ENCODE measurements at regions of chr7 and their contacts with region 1.

Region 1: GRCh38 chr7:148962823-148963582 is 65.3 kb downstream of the PDIA4 start:
- DNase-seq: peak in 1 of 2 experiments; percentile 63
- H3K4me3 ChIP-seq: peak overlapping the region; percentile 67
- H3K4me3 Mint-ChIP-seq: peak overlapping the region; percentile 92
- H3K27ac Mint-ChIP-seq: peak overlapping the region; percentile 70
- H3K4me1 ChIP-seq: peaks cover 10% of the 10 kb centered on the region; the same call in 1 of the 2 replicates
- H3K4me1 Mint-ChIP-seq: peaks cover 18% of the 10 kb centered on the region
- H3K27me3 ChIP-seq: no peaks in the 10 kb centered on the region
- H3K27me3 Mint-ChIP-seq: no peaks in the 10 kb centered on the region
- CTCF ChIP-seq: peak; percentile 64 to 74

Region 2: GRCh38 chr7:148503875-148504487 is 459.0 kb before region 1 on chr7:
- CTCF ChIA-PET with region 1: interaction called, 3 read pairs
- POLR2A ChIA-PET with region 1: no interaction called
- intact Hi-C with region 1: loop called (anchors 1 kb)
- DNase-seq: peak in 1 of 2 experiments; percentile 29
- H3K4me3 ChIP-seq: no peak overlapping the region
- H3K4me3 Mint-ChIP-seq: no peak overlapping the region
- H3K27ac Mint-ChIP-seq: no peak overlapping the region
- H3K4me1 ChIP-seq: no peaks in the 10 kb centered on the region
- H3K4me1 Mint-ChIP-seq: peaks cover 20% of the 10 kb centered on the region
- H3K27me3 ChIP-seq: no peaks in the 10 kb centered on the region
- H3K27me3 Mint-ChIP-seq: no peaks in the 10 kb centered on the region
- CTCF ChIP-seq: peak; percentile 68 to 76

Region 3: GRCh38 chr7:148708026-148708885 is 254.7 kb before region 1 on chr7:
- CTCF ChIA-PET with region 1: no interaction called
- POLR2A ChIA-PET with region 1: no interaction called
- intact Hi-C with region 1: loop called (anchors 5 kb)
- DNase-seq: no peak
- H3K4me3 ChIP-seq: no peak overlapping the region
- H3K4me3 Mint-ChIP-seq: peak overlapping the region; percentile 1
- H3K27ac Mint-ChIP-seq: peak overlapping the region; percentile 17
- H3K4me1 ChIP-seq: peaks cover 40% of the 10 kb centered on the region
- H3K4me1 Mint-ChIP-seq: peaks cover 44% of the 10 kb centered on the region
- H3K27me3 ChIP-seq: no peaks in the 10 kb centered on the region
- H3K27me3 Mint-ChIP-seq: no peaks in the 10 kb centered on the region
- CTCF ChIP-seq: no peak

Region 4: DNA sequence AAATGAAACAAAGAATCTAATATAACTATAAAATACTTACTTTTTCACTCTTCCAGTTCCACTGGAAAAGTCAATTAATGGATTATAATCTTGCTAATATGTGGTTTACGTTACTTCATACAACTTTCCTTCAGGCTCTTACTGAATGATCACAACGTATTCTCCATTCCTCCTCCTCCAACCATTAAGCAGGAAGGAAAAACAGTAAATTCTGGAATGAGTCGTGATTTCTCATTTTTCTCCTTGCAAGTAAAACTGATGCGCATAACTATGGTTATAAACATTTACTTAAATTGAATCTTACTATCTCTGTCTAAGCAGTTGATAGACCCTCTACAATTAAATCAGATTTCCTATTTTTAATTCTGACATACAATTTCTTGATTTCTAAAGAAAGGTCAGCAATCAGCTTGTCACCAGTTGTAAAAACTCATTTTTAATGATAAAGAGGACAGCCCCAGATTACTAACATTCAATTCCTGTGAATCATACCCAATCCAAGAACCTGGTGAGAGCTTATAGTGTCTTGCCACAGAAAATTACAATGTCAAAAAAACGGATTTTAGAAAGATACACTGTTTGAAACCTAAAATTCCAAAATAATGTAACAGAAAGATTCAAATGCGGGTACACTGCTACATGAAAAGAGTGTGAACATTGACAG is 143.2 kb before region 1 on chr7:
- CTCF ChIA-PET with region 1: interaction called, 3 read pairs
- POLR2A ChIA-PET with region 1: no interaction called
- intact Hi-C with region 1: loop called (anchors 2 kb)
- DNase-seq: no peak
- H3K4me3 ChIP-seq: no peak overlapping the region
- H3K4me3 Mint-ChIP-seq: no peak overlapping the region
- H3K27ac Mint-ChIP-seq: no peak overlapping the region
- H3K4me1 ChIP-seq: no peaks in the 10 kb centered on the region; the same call in 1 of the 2 replicates
- H3K4me1 Mint-ChIP-seq: peaks cover 6% of the 10 kb centered on the region
- H3K27me3 ChIP-seq: no peaks in the 10 kb centered on the region
- H3K27me3 Mint-ChIP-seq: no peaks in the 10 kb centered on the region
- CTCF ChIP-seq: no peak

Region 5: DNA sequence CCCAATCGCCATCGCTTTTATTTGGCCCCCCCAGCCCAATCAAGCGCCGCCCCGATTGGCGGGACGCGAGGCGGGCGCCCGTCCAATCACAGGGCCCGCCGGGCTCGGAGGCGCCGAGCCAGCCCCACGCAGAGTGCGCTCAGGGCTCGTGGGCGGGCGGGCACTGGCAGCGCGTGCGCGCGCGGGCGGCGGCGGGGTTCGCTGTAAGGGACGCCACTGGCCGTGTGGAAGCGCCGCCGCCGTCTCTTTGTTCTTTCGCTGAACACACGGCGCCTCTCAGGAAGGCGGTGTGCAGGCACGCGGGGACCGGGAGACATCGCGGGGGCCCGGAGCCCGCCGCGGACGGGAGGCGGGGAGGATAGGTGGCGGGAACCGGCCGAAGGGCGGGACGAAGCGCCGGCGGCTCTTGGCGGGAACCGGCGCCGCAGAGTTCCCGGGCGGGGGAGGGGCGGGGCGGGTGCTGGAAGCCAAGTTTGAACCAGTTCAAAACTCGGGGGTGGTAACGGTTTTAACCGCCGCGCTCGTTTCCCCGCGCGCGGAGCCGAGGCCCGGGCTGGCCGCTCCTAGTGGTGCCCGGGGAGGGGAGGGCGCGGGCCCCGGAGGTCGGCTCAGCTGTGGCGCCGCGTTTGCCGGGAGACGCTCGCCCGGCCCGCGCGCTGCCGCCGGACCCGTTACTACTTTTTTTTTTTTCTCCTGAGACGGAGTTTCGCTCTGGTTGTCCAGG is 78.5 kb before region 1 on chr7:
- CTCF ChIA-PET with region 1: no interaction called
- POLR2A ChIA-PET with region 1: no interaction called
- intact Hi-C with region 1: loop called (anchors 2 kb)
- DNase-seq: peak; percentile 91 to 96
- H3K4me3 ChIP-seq: peak overlapping the region; percentile 98
- H3K4me3 Mint-ChIP-seq: peak overlapping the region; percentile 95
- H3K27ac Mint-ChIP-seq: peak overlapping the region; percentile 93
- H3K4me1 ChIP-seq: peaks cover 6% of the 10 kb centered on the region; the same call in 1 of the 2 replicates
- H3K4me1 Mint-ChIP-seq: no peaks in the 10 kb centered on the region
- H3K27me3 ChIP-seq: no peaks in the 10 kb centered on the region
- H3K27me3 Mint-ChIP-seq: no peaks in the 10 kb centered on the region
- CTCF ChIP-seq: no peak

Region 6: DNA sequence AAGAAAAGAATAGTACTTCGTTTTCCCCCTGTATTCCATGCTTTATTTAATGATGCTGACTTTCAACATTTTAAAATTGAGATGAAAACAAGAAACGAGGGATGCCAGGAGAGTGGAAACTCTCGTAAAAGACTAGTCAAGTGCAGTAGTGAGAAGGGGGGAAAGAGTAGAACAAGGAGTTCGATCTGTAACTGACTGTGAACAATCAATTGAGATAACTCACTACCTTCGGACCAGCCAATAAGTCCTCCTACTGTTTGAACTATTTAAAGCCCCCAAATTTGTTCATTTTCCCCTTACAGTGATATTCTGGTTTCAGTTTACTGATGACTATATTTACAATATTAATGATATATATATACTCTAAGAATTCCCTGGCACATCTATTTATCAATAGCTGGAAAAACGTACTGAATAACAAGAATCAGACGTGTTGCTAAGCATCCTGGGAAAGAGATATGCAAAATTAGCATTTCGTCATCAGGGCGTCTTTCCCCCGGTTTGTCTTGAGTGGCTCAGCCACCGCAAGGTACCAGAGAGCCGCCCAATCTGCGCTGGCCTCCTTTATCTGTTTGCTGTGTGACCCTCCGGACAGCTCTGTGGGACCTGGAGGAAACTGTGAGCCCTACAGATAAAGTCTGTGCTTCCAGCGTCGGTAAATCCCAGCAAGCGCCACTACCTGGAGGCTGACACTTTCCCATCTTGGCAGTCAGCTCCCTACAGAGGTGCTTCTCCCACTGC is 24.2 kb after region 1 on chr7:
- CTCF ChIA-PET with region 1: interaction called, 5 read pairs
- POLR2A ChIA-PET with region 1: interaction called, 3 read pairs
- intact Hi-C with region 1: loop called (anchors 1 kb)
- DNase-seq: peak; percentile 90 to 95
- H3K4me3 ChIP-seq: peak overlapping the region; percentile 50
- H3K4me3 Mint-ChIP-seq: peak overlapping the region; percentile 84
- H3K27ac Mint-ChIP-seq: peak overlapping the region; percentile 85
- H3K4me1 ChIP-seq: peaks cover 13% of the 10 kb centered on the region
- H3K4me1 Mint-ChIP-seq: peaks cover 44% of the 10 kb centered on the region
- H3K27me3 ChIP-seq: no peaks in the 10 kb centered on the region
- H3K27me3 Mint-ChIP-seq: no peaks in the 10 kb centered on the region
- CTCF ChIP-seq: no peak